Naive thymus-derived CD4-positive, alpha-beta T cell (primary cell): ENCODE measurements at regions of chr14 and their contacts with region 1.

Region 1: GRCh38 chr14:41623736-41624135 is 17.1 kb downstream of the LRFN5 start:
- DNase-seq: no peak
- ATAC-seq: no peak
- H3K4me3 ChIP-seq: no peak overlapping the region
- H3K4me3 Mint-ChIP-seq: no peak overlapping the region
- H3K27ac ChIP-seq: no peak overlapping the region
- H3K27ac Mint-ChIP-seq: no peak overlapping the region
- H3K4me1 ChIP-seq: no peaks in the 10 kb centered on the region
- H3K4me1 Mint-ChIP-seq: no peaks in the 10 kb centered on the region
- H3K27me3 ChIP-seq: no peaks in the 10 kb centered on the region
- H3K27me3 Mint-ChIP-seq: peaks cover 0 to 10% (median 0%) of the 10 kb centered on the region in 5 donors

Region 2: DNA sequence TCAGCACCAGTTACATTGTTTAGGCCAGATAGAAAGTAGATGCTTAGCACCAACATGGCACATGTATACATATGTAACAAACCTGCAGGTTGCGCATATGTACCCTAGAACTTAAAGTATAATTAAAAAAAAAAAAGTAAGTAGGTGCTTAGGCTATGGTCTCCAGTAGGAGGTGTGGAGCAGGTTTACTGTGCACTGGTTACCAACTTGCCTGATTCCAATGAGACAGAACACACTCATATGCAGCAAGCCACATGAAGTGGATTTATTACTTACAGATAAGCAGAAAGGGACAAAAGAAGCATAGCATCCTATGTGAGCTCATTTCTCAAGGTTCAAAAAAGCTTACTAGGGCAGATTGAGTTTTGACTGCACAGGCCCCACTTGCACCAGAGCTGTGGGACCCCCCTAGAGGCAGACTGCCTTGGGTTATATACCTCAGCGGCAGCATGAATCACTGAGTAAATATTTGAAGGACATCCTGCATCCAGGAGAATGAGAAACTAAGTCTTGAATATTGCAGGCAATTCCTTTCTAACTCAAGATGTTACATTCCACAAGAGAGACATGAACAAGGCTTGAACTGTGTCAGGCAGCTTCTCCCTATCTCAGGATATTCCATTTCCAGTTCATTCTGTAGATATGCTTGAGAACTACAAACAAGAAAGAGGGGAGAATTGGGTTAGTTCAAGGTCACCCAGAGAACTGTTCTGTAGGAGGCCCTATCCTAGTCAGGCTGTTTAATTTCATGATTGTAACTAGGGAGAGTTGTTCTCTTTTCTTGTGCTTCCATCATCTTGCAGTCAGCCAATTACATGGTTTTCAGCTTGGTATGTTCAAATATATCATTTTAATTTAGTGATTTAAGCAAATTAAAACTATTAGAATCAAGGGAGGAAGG is 13.0 kb after region 1 on chr14:
- CTCF ChIA-PET with region 1: no interaction called
- POLR2A ChIA-PET with region 1: no interaction called
- intact Hi-C with region 1: no loop called
- DNase-seq: no peak
- ATAC-seq: no peak
- H3K4me3 ChIP-seq: no peak overlapping the region
- H3K4me3 Mint-ChIP-seq: no peak overlapping the region
- H3K27ac ChIP-seq: no peak overlapping the region
- H3K27ac Mint-ChIP-seq: no peak overlapping the region
- H3K4me1 ChIP-seq: no peaks in the 10 kb centered on the region
- H3K4me1 Mint-ChIP-seq: no peaks in the 10 kb centered on the region
- H3K27me3 ChIP-seq: no peaks in the 10 kb centered on the region
- H3K27me3 Mint-ChIP-seq: peaks cover 0 to 6% (median 3%) of the 10 kb centered on the region in 5 donors

Region 3: GRCh38 chr14:43525658-43526057 is 1901.9 kb after region 1 on chr14:
- CTCF ChIA-PET with region 1: no interaction called
- POLR2A ChIA-PET with region 1: no interaction called
- intact Hi-C with region 1: loop called in 1 of 2 experiments (anchors 10 kb)
- DNase-seq: no peak
- ATAC-seq: no peak
- H3K4me3 ChIP-seq: no peak overlapping the region
- H3K4me3 Mint-ChIP-seq: no peak overlapping the region
- H3K27ac ChIP-seq: no peak overlapping the region
- H3K27ac Mint-ChIP-seq: no peak overlapping the region
- H3K4me1 ChIP-seq: no peaks in the 10 kb centered on the region
- H3K4me1 Mint-ChIP-seq: no peaks in the 10 kb centered on the region
- H3K27me3 ChIP-seq: no peaks in the 10 kb centered on the region
- H3K27me3 Mint-ChIP-seq: no peaks in the 10 kb centered on the region